ENCODE measurements at regions of chr1 and their contacts with region 1.

Region 1: DNA sequence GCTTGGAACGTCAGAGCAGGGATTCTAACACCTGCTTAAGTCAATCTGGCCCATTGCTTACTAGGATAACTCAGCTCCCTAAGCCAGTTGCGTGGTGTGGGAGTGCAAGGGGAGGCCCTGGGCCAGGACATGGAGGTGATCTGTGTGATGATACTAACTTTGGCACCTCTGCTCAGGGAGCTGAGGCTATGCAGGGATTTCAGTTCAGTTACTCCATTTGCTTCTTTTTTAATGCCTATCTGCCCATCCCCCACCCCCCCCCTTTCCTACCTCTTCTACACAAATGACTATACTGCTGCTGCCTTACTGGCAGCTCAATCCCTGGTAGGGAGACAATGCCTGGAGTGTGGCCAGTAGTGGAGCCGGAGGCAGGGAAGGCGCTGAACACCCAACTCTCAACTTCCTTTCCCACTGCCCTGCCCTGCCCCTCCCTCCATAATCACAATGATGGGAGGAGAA is 19.5 kb downstream of the INKA2 start:
- DNase-seq: no peak
- H3K4me3 ChIP-seq: no peak overlapping the region
- H3K27ac ChIP-seq: no peak overlapping the region
- H3K4me1 ChIP-seq: peaks cover 2 to 14% (median 10%) of the 10 kb centered on the region in 4 experiments; a peak in 5 of 7 replicates
- H3K27me3 ChIP-seq: no peaks in the 10 kb centered on the region; a peak in 1 of 7 replicates
- CTCF ChIP-seq: no peak
- EP300 ChIP-seq: no peak
- POLR2A ChIP-seq: no peak
- RAD21 ChIP-seq: no peak

Region 2: DNA sequence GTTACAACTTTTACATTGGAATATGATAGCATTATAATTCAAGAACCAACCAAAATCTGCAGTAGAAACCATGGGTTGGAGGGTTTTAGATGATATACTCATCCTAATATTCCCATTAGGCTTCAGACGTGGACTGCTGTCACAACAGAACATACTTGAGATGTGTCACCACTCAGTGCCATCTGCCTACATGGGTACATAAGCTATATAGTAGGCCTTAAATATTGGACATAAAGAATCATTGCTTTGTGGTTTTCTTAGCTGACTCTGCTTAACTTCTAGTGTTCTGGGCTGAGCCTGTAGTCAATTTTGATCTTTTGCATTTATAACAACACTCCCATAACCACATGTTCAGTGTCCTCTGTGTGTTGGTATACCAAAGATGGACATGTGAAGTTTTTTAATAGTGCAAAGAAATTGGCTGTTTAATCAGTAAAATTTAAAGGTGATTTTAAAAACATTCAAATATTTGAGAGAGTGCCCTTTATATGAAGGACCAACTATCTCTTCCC is 85.9 kb before region 1 on chr1:
- CTCF ChIA-PET with region 1: no interaction called
- POLR2A ChIA-PET with region 1: no interaction called
- DNase-seq: no peak
- H3K4me3 ChIP-seq: no peak overlapping the region
- H3K27ac ChIP-seq: no peak overlapping the region
- H3K4me1 ChIP-seq: no peaks in the 10 kb centered on the region
- H3K27me3 ChIP-seq: no peaks in the 10 kb centered on the region
- CTCF ChIP-seq: no peak
- EP300 ChIP-seq: no peak
- POLR2A ChIP-seq: no peak
- RAD21 ChIP-seq: no peak

Region 3: GRCh38 chr1:111691886-111692285 is 27.8 kb before region 1 on chr1:
- CTCF ChIA-PET with region 1: interaction called, 15 read pairs
- POLR2A ChIA-PET with region 1: no interaction called
- DNase-seq: no peak
- H3K4me3 ChIP-seq: no peak overlapping the region
- H3K27ac ChIP-seq: no peak overlapping the region
- H3K4me1 ChIP-seq: no peaks in the 10 kb centered on the region
- H3K27me3 ChIP-seq: no peaks in the 10 kb centered on the region
- CTCF ChIP-seq: no peak
- EP300 ChIP-seq: no peak
- POLR2A ChIP-seq: no peak
- RAD21 ChIP-seq: no peak

Region 4: DNA sequence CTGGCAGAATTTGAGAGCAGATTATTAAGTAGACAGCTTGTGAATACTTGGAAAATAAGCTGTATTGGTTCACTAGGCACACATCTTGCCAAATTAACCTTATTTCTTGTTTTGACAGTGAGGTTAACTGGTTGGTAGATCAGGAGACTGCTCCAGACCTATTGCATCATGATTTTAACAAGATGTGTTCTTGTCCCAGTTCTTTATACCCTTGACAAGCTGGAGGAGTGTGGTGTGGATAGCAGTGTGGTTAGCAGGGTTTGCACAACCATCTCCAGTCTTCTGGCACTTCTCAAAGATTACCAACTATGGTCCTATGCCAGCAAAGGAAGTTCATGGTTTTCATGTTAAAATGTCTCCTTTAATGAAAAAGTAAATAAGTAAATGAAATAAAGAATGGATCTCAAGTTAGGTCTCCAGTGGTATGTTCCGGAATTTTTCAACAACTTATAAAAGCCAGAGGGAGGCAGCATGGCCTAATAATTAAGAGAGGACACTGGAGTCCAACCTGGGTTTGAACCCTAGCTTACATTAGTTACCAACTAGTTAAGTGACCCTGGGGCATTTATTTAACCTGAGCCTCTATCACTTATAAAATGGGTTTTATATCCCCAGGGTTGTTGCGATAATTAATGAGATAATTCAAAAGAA is 70.1 kb after region 1 on chr1:
- CTCF ChIA-PET with region 1: no interaction called
- POLR2A ChIA-PET with region 1: no interaction called
- DNase-seq: no peak
- H3K4me3 ChIP-seq: no peak overlapping the region
- H3K27ac ChIP-seq: no peak overlapping the region
- H3K4me1 ChIP-seq: peaks cover 0 to 4% (median 0%) of the 10 kb centered on the region in 4 experiments; a peak in 1 of 7 replicates
- H3K27me3 ChIP-seq: no peaks in the 10 kb centered on the region
- CTCF ChIP-seq: no peak; a peak in 1 of 4 replicates
- EP300 ChIP-seq: no peak
- POLR2A ChIP-seq: no peak
- RAD21 ChIP-seq: peak; percentile 25 to 41; a peak in 2 of 4 replicates